T-cell (primary cell): ENCODE measurements at regions of chr4 and their contacts with region 1.

Region 1: DNA sequence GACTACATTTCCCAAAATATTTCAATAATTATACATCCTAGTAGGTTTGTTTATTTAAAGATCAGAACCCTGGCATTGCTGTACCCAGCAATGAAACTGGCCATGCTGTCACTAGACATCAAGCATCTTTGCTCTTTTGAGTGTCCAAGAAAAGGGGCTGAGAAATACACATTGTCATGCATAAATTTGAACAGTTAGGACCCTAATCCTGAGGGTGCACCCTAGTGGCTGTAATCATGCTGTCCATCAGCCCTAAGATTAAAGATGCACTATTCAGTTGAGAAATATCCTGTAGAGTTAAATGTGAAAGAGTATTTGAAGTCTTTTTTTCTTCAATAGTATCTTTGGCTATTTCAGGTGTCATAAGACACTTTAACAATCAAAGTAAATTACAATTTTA is 108.8 kb downstream of the NFKB1 start:
- DNase-seq: no peak
- ATAC-seq: no peak
- H3K4me3 ChIP-seq: no peak overlapping the region
- H3K4me3 Mint-ChIP-seq: peak overlapping the region in 1 of 3 donors; percentile 28
- H3K27ac ChIP-seq: no peak overlapping the region
- H3K27ac Mint-ChIP-seq: peak overlapping the region; percentile 98 to 99
- H3K4me1 ChIP-seq: peaks cover 37 to 42% of the 10 kb centered on the region in 2 experiments
- H3K4me1 Mint-ChIP-seq: peaks cover 72 to 89% (median 82%) of the 10 kb centered on the region in 3 donors
- H3K27me3 ChIP-seq: no peaks in the 10 kb centered on the region
- H3K27me3 Mint-ChIP-seq: no peaks in the 10 kb centered on the region

Region 2: DNA sequence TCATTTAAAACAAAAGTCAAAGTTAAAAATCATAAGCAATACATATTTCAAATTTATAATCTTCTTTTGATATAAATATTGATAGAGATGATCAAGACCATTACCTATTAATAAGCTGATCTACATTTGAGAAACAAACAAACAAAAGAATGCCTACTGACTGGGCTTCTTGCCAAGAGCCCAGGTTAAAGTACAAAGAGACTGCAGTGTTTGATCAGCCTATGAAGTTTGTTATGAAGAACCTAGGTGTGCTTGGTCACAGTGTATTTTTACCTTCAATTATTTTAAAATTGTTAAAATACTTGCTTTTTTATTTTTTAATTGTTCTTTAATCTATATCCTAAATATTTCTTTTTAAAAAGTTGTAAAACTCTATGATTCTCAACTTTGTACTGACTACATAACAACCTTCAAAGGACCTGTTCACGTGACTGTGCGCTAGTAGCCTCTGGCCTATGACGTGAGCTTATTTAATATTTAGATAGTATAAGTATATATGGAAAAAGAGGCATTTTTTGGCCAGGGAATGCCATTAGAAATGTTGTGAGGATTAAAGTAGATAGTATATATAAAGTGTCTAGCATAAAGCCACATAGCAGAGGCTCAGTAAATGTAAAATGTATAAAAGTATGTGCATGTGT is 253.3 kb before region 1 on chr4:
- CTCF ChIA-PET with region 1: no interaction called
- POLR2A ChIA-PET with region 1: no interaction called
- DNase-seq: no peak
- ATAC-seq: no peak
- H3K4me3 ChIP-seq: no peak overlapping the region
- H3K4me3 Mint-ChIP-seq: no peak overlapping the region
- H3K27ac ChIP-seq: no peak overlapping the region
- H3K27ac Mint-ChIP-seq: no peak overlapping the region
- H3K4me1 ChIP-seq: no peaks in the 10 kb centered on the region
- H3K4me1 Mint-ChIP-seq: peaks cover 2 to 12% (median 5%) of the 10 kb centered on the region in 3 donors
- H3K27me3 ChIP-seq: no peaks in the 10 kb centered on the region
- H3K27me3 Mint-ChIP-seq: no peaks in the 10 kb centered on the region

Region 3: GRCh38 chr4:102525097-102525496 is 84.9 kb before region 1 on chr4:
- CTCF ChIA-PET with region 1: no interaction called
- POLR2A ChIA-PET with region 1: interaction called in 1 of 2 experiments, 10 read pairs
- DNase-seq: no peak
- ATAC-seq: no peak
- H3K4me3 ChIP-seq: no peak overlapping the region
- H3K4me3 Mint-ChIP-seq: no peak overlapping the region
- H3K27ac ChIP-seq: no peak overlapping the region
- H3K27ac Mint-ChIP-seq: peak overlapping the region; percentile 56 to 84
- H3K4me1 ChIP-seq: peaks cover 16 to 32% of the 10 kb centered on the region in 2 experiments
- H3K4me1 Mint-ChIP-seq: peaks cover 87 to 92% (median 88%) of the 10 kb centered on the region in 3 donors
- H3K27me3 ChIP-seq: no peaks in the 10 kb centered on the region
- H3K27me3 Mint-ChIP-seq: no peaks in the 10 kb centered on the region